Calu3 (cell line): ENCODE measurements at regions of chr7 and their contacts with region 1.

Region 1: GRCh38 chr7:16688249-16688648 is 42.3 kb downstream of the BZW2 start:
- DNase-seq: no peak
- H3K4me3 Mint-ChIP-seq: no peak overlapping the region
- H3K27ac Mint-ChIP-seq: no peak overlapping the region
- H3K4me1 Mint-ChIP-seq: peaks cover 9% of the 10 kb centered on the region
- H3K27me3 Mint-ChIP-seq: no peaks in the 10 kb centered on the region
- CTCF ChIP-seq: no peak

Region 2: GRCh38 chr7:16114633-16115032 is 573.6 kb before region 1 on chr7:
- CTCF ChIA-PET with region 1: no interaction called
- intact Hi-C with region 1: loop called (anchors 5 kb)
- DNase-seq: peak; percentile 34
- H3K4me3 Mint-ChIP-seq: no peak overlapping the region
- H3K27ac Mint-ChIP-seq: peak overlapping the region; percentile 21
- H3K4me1 Mint-ChIP-seq: peaks cover 24% of the 10 kb centered on the region
- H3K27me3 Mint-ChIP-seq: no peaks in the 10 kb centered on the region
- CTCF ChIP-seq: peak; percentile 71

Region 3: GRCh38 chr7:16609842-16610450 is 78.3 kb before region 1 on chr7:
- CTCF ChIA-PET with region 1: no interaction called
- intact Hi-C with region 1: loop called (anchors 5 kb)
- DNase-seq: peak; percentile 44
- H3K4me3 Mint-ChIP-seq: peak overlapping the region; percentile 50
- H3K27ac Mint-ChIP-seq: peak overlapping the region; percentile 63
- H3K4me1 Mint-ChIP-seq: peaks cover 49% of the 10 kb centered on the region
- H3K27me3 Mint-ChIP-seq: no peaks in the 10 kb centered on the region
- CTCF ChIP-seq: no peak